Mammary epithelial cell (primary cell): ENCODE measurements at regions of chr19 and their contacts with region 1.

Region 1: GRCh38 chr19:6632002-6632621 is 37.8 kb downstream of the TNFSF14 start:
- DNase-seq: peak; percentile 59
- H3K4me3 ChIP-seq: no peak overlapping the region
- H3K27ac ChIP-seq: no peak overlapping the region
- H3K4me1 ChIP-seq: no peaks in the 10 kb centered on the region
- H3K27me3 ChIP-seq: no peaks in the 10 kb centered on the region
- CTCF ChIP-seq: peak; percentile 82 to 91

Region 2: GRCh38 chr19:6125571-6125989 is 506.5 kb before region 1 on chr19:
- CTCF ChIA-PET with region 1: no interaction called
- dilution Hi-C with region 1: no loop called
- in situ Hi-C with region 1: no loop called
- intact Hi-C with region 1: loop called (anchors 1 kb)
- DNase-seq: peak; percentile 73
- H3K4me3 ChIP-seq: no peak overlapping the region
- H3K27ac ChIP-seq: no peak overlapping the region
- H3K4me1 ChIP-seq: no peaks in the 10 kb centered on the region
- H3K27me3 ChIP-seq: no peaks in the 10 kb centered on the region
- CTCF ChIP-seq: peak; percentile 96 to 97

Region 3: GRCh38 chr19:6516659-6517291 is 115.3 kb before region 1 on chr19:
- CTCF ChIA-PET with region 1: interaction called, 4 read pairs
- dilution Hi-C with region 1: no loop called
- in situ Hi-C with region 1: loop called in 1 of 2 experiments (anchors 10 kb)
- intact Hi-C with region 1: loop called (anchors 1 kb)
- DNase-seq: peak; percentile 78
- H3K4me3 ChIP-seq: peak overlapping the region; percentile 52 to 83 (median 67)
- H3K27ac ChIP-seq: peak overlapping the region; percentile 43
- H3K4me1 ChIP-seq: peaks cover 13% of the 10 kb centered on the region
- H3K27me3 ChIP-seq: no peaks in the 10 kb centered on the region
- CTCF ChIP-seq: peak; percentile 87 to 98

Region 4: DNA sequence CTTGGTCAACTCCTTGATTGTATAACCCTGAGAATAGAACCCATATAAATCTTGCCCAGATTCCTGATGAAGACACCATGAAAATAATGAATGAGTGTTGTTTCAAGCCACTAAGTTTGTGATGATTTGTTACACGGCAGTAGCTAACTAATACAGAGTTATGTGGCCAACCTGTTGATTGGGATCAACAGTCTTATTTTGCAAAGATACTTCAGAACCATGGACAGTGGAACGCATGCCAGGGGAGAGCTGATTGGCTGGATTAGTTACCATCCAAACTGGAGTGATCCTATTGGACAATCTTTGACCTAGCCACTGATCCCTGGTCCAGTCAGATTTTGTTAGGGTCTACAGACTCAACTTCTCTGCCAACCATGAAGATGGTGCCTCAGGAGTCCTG is 67.7 kb before region 1 on chr19:
- CTCF ChIA-PET with region 1: no interaction called
- dilution Hi-C with region 1: no loop called
- in situ Hi-C with region 1: no loop called
- intact Hi-C with region 1: loop called (anchors 1 kb)
- DNase-seq: peak; percentile 47
- H3K4me3 ChIP-seq: no peak overlapping the region
- H3K27ac ChIP-seq: no peak overlapping the region
- H3K4me1 ChIP-seq: no peaks in the 10 kb centered on the region
- H3K27me3 ChIP-seq: no peaks in the 10 kb centered on the region
- CTCF ChIP-seq: no peak

Region 5: GRCh38 chr19:6644796-6645195 is 12.7 kb after region 1 on chr19:
- CTCF ChIA-PET with region 1: no interaction called
- dilution Hi-C with region 1: no loop called
- in situ Hi-C with region 1: no loop called
- intact Hi-C with region 1: no loop called
- DNase-seq: no peak
- H3K4me3 ChIP-seq: no peak overlapping the region
- H3K27ac ChIP-seq: no peak overlapping the region
- H3K4me1 ChIP-seq: no peaks in the 10 kb centered on the region
- H3K27me3 ChIP-seq: no peaks in the 10 kb centered on the region
- CTCF ChIP-seq: no peak

Region 6: GRCh38 chr19:6718741-6719539 is 86.8 kb after region 1 on chr19:
- CTCF ChIA-PET with region 1: no interaction called
- dilution Hi-C with region 1: no loop called
- in situ Hi-C with region 1: no loop called
- intact Hi-C with region 1: loop called (anchors 5 kb)
- DNase-seq: peak; percentile 23
- H3K4me3 ChIP-seq: peak overlapping the region in 1 of 3 experiments; percentile 31
- H3K27ac ChIP-seq: no peak overlapping the region
- H3K4me1 ChIP-seq: peaks cover 35% of the 10 kb centered on the region
- H3K27me3 ChIP-seq: no peaks in the 10 kb centered on the region
- CTCF ChIP-seq: no peak

Region 7: DNA sequence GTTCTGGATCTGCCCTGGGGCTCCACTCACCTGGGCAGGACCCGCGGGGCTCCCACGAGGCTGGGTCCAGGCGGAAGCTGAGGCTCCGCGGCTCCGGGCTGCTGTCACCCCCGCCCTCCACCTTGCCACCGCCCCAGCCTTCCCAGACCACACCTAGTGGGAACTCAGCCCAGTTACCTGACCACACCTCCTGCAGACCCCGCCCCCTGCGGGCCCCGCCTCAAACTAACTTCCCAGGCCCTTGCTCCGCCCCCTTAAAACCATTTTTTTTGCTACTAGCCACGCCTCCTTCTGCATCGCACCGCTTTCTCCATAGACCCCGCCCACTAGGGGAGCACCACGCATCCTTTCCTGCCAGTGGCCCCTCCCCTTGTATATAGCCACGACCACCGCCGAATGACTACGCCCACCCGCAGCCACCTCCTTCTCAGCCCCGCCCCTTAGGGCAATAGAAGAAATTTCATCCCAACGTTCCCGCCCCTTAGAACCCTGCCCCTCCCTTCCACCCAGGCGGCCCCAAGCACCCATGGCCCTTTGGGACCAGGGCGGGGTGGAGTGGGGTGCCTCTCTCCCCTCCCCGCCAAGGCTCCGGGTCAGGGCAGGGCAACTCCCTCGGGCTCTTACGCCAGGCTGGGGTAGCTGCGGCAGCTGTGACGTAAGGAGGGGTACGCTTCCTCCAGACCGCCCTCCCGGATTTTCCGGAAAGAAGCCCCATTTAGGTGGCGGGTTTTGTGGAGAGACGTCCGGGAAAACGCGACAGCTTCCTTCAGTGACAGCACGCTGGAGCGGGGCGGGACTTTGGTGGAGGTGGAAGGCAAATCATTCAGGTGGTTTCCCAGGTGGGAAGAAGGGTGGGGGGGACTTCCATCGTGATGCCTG is 135.5 kb after region 1 on chr19 and contains the start of gene SH2D3A:
- CTCF ChIA-PET with region 1: no interaction called
- dilution Hi-C with region 1: no loop called
- in situ Hi-C with region 1: no loop called
- intact Hi-C with region 1: loop called (anchors 1 kb)
- DNase-seq: peak; percentile 96
- H3K4me3 ChIP-seq: peak within 1 kb of the TSS; percentile 75 to 86 (median 81)
- H3K27ac ChIP-seq: peak within 1 kb of the TSS; percentile 94
- H3K4me1 ChIP-seq: peaks cover 16% of the 10 kb centered on the region
- H3K27me3 ChIP-seq: no peaks in the 10 kb centered on the region
- CTCF ChIP-seq: no peak
- total RNA-seq, gene SH2D3A: 59.0 to 95.1 TPM